Gastrocnemius medialis (tissue), 4 donors: ENCODE measurements at regions of chr6 and their contacts with region 1.

Region 1: DNA sequence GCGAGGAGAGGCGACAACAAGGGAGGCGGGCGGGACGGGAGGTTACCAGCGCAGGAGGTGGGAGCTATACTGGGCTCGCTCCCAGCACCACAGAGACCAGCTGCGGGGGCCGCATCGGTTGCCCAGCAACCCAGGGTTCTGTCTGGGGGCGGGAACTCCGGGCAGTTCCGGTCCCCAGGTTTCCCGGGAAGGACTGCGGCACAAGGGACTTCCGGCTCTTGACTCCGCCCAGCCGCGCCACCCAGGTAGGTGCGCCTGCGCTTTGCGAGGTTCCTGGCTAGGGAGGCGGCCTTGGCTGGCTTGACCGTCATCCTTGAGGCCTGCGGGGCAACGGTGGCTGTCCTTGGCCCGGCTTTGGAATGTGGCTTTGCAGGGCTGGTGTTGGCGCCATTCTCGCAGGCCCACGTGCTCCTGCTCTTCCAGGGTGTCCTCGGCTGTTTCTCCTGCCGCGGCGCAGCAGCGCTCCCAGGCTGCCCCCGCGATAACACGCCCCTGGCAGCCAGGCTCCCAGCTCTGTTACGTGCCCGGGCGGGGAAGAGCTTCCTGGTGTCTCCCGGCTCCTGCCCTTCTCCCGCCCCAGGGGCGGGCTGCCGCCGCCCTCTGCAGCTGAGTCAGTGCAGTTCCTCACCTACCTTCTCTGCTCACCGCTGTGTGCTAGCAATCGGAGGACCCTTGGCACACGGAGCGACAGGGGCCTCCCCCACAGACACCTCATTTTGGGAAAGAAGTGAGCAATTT is at the start of gene RSPH3:
- DNase-seq: peak; percentile 91 to 95
- ATAC-seq: peak; percentile 88 to 93
- H3K4me3 ChIP-seq: peak within 1 kb of the TSS; percentile 70 to 77 (median 74)
- H3K27ac ChIP-seq: peak within 1 kb of the TSS; percentile 81 to 91 (median 88)
- H3K4me1 ChIP-seq: peaks cover 13 to 20% of the 10 kb centered on the region in 2 donors
- H3K27me3 ChIP-seq: no peaks in the 10 kb centered on the region
- CTCF ChIP-seq: peak; percentile 13 to 45 (median 35)
- POLR2A ChIP-seq: peak; percentile 32 to 37
- total RNA-seq, gene RSPH3: 1.9 to 4.4 (median 2.3) TPM

Region 2: DNA sequence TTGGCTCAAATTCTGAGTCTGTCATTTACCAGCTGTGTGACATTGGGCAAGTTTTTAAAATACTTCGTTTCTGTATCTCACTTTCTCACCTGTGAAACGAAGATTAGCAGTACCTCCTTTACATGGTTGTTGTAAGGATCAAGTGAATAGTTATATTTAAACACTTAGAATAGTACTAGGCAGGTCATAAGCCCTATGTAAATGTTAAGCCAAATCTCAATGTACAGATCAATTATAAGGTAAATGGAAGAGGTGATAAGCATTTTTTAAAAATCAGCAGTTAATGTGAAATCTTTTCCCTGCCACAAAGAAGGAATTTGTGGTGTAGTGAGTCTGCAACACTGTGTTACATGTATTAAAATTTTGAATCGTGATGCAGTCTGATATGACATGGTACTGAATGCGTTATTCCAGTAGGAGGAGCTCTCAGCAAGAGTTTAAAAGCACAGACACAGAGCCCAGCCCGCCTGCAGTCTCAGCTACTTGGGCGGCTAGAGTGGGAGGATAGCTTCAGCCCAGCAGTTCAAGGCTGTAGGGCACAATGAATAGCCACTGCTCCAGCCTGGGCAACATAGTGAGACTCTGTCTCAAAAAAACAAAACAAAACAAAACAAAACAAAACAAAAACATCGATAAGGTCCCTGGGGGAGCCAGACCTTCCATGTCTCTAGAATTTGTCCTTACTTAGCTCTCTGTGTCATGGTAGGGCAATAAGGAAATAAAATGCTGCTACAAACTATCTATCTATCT is 785.7 kb before region 1 on chr6:
- in situ Hi-C with region 1: loop called in 1 of 4 experiments (anchors 25 kb)
- intact Hi-C with region 1: no loop called
- DNase-seq: peak; percentile 16 to 28
- ATAC-seq: peak; percentile 74 to 82
- H3K4me3 ChIP-seq: no peak overlapping the region
- H3K27ac ChIP-seq: no peak overlapping the region
- H3K4me1 ChIP-seq: no peaks in the 10 kb centered on the region
- H3K27me3 ChIP-seq: no peaks in the 10 kb centered on the region
- CTCF ChIP-seq: peak in 4 of 5 experiments; percentile 22 to 69 (median 53)
- POLR2A ChIP-seq: no peak

Region 3: GRCh38 chr6:158769771-158770432 is 229.9 kb before region 1 on chr6:
- in situ Hi-C with region 1: no loop called
- intact Hi-C with region 1: no loop called
- DNase-seq: peak in 1 of 2 donors; percentile 26
- ATAC-seq: peak; percentile 15 to 41
- H3K4me3 ChIP-seq: no peak overlapping the region
- H3K27ac ChIP-seq: no peak overlapping the region
- H3K4me1 ChIP-seq: no peaks in the 10 kb centered on the region
- H3K27me3 ChIP-seq: no peaks in the 10 kb centered on the region
- CTCF ChIP-seq: no peak
- POLR2A ChIP-seq: no peak

Region 4: DNA sequence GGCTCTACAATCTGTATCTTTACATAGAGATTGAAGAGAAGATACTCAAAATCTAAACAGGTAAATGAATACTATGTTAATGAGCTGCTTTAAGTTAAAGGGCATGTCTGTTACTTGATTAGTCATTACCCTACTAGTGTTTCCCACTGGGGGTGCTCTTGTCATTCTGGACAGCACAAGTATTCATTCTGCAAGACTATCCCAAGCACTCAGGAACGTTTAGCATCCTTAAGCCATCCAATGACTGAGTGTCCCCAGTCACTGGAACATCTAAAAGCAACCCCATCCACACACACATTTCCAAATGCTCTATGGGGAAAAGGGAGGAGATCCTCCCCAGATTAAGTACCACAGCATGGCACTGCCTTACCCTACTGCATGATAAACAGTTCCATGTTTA is 206.4 kb before region 1 on chr6:
- in situ Hi-C with region 1: no loop called
- intact Hi-C with region 1: loop called (anchors 2 kb)
- DNase-seq: no peak
- ATAC-seq: peak; percentile 57 to 68
- H3K4me3 ChIP-seq: no peak overlapping the region
- H3K27ac ChIP-seq: peak overlapping the region in 1 of 4 donors; percentile 69
- H3K4me1 ChIP-seq: peaks cover 0 to 15% of the 10 kb centered on the region in 2 donors
- H3K27me3 ChIP-seq: no peaks in the 10 kb centered on the region
- CTCF ChIP-seq: peak in 3 of 5 experiments; percentile 16 to 37 (median 33)
- POLR2A ChIP-seq: no peak

Region 5: GRCh38 chr6:158819213-158819909 is 180.5 kb before region 1 on chr6 and contains the start of gene EZR:
- in situ Hi-C with region 1: no loop called
- intact Hi-C with region 1: loop called (anchors 1 kb)
- DNase-seq: peak; percentile 34 to 70
- ATAC-seq: peak; percentile 44 to 53
- H3K4me3 ChIP-seq: peak within 1 kb of the TSS; percentile 81 to 88 (median 84)
- H3K27ac ChIP-seq: peak within 1 kb of the TSS; percentile 90 to 93 (median 92)
- H3K4me1 ChIP-seq: peaks cover 10 to 17% of the 10 kb centered on the region in 2 donors
- H3K27me3 ChIP-seq: no peaks in the 10 kb centered on the region
- CTCF ChIP-seq: no peak
- POLR2A ChIP-seq: peak; percentile 57 to 74
- total RNA-seq, gene EZR: 18.1 to 54.1 (median 33.6) TPM

Region 6: DNA sequence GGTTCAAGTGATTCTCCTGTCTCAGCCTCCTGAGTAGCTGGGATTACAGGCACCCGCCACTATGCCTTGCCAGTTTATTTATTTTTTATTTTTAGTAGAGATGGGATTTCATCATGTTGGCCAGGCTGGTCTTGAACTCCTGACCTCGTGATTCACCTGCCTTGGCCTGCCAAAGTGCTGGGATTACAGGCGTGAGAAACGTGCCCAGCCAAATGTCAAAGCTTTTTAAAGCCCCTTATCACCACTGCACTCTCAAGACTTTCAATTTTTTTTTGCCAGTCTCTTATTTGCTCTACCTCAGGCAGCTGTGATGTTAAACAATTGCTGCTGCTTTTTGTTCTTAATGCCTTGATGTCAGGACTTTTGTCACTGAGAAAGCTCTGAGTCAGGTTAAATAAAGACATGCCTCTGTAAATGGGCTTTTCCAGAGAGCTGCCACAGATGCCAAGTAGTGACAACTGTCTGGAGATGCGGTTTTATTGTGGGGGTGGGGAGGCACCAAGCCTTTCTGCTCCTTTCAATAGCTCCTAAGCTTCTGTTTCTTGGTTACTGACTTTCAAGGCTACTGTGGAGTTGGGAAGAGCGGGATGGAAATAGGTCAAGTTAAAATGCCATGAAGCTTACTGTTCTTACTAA is 29.1 kb before region 1 on chr6:
- in situ Hi-C with region 1: no loop called
- intact Hi-C with region 1: no loop called
- DNase-seq: no peak
- ATAC-seq: peak in 1 of 2 donors; percentile 65
- H3K4me3 ChIP-seq: no peak overlapping the region
- H3K27ac ChIP-seq: no peak overlapping the region
- H3K4me1 ChIP-seq: no peaks in the 10 kb centered on the region
- H3K27me3 ChIP-seq: no peaks in the 10 kb centered on the region
- CTCF ChIP-seq: no peak
- POLR2A ChIP-seq: no peak

Region 7: DNA sequence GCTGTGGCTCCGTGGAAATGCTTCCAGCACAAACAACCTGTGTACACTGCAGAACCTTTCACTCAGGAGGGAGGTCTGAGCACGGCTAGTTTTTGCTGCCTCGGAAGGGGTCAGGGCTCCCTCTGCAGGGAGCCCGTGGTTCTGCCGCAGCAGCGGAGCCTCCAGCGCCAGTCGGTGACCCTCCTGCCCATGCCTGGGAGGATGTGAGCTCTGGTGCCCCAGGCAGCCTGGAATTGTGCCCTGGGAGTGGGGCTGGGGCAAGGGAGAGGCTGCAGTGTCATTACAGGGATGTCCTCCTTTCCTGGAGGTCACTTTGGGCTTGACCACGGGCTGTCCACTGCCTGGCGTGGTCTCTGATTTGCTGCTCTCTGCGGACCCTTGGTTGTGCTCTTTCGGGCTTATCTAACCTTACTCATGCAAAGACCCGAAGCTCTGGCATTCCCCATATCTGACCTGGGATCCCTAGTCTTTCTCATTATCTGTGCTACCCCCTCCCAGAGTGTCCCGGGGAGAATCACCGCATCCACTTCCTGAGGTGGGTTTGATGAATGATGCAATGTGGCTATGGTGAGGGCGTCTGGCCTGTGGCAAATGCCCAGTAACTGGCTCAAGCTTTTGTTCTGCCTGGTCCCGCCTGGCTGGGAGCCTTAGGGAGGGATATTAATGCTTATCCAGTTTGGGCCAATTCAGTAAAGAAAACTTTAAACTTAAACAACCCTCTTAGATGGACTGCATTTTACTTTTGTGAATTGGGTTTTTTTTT is 104.5 kb after region 1 on chr6:
- in situ Hi-C with region 1: no loop called
- intact Hi-C with region 1: loop called (anchors 5 kb)
- DNase-seq: no peak
- ATAC-seq: peak; percentile 83 to 84
- H3K4me3 ChIP-seq: no peak overlapping the region
- H3K27ac ChIP-seq: no peak overlapping the region
- H3K4me1 ChIP-seq: peaks cover 4 to 7% of the 10 kb centered on the region in 2 donors
- H3K27me3 ChIP-seq: no peaks in the 10 kb centered on the region
- CTCF ChIP-seq: peak; percentile 48 to 84 (median 66)
- POLR2A ChIP-seq: no peak

Region 8: GRCh38 chr6:159125014-159125609 is 125.3 kb after region 1 on chr6:
- in situ Hi-C with region 1: no loop called
- intact Hi-C with region 1: loop called (anchors 5 kb)
- DNase-seq: no peak
- ATAC-seq: no peak
- H3K4me3 ChIP-seq: no peak overlapping the region
- H3K27ac ChIP-seq: peak overlapping the region; percentile 89 to 93 (median 90)
- H3K4me1 ChIP-seq: peaks cover 16 to 40% of the 10 kb centered on the region in 2 donors
- H3K27me3 ChIP-seq: no peaks in the 10 kb centered on the region
- CTCF ChIP-seq: no peak
- POLR2A ChIP-seq: no peak